ENCODE measurements at regions of chr4 and their contacts with region 1.

Region 1: DNA sequence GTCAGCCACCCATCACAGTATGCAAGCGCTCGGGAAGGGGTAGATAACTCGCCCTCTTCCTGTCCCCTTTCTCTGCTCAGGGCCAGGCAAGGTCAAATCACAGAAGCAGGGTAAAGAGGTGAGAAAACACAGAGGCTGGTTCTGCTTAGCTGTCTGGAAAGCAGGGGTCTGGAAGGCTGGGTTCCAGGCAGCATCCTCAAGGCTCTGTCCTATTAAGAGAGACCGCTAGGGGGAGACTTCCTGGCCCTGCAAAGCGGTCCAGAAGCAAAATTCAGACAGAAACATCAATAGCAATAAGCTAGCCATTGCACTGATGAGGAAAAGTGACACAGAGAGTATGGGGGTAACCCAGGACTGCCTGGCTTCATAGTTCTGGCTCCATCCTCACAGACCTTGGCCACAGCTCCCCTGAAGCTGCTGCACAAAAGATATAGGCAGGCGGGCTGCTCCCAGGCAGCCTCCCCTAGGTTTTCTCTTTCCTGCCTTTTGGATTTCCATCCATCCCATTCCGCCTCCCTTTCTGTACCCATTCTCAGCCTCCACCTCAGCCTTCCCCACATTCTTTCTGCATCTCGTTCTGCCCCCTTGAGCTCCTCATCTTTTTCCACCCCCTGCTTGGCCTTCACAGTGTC is 308.5 kb downstream of the EVC2 start:
- DNase-seq: peak; percentile 38
- ATAC-seq: peak; percentile 79
- H3K4me3 ChIP-seq: no peak overlapping the region
- H3K27ac ChIP-seq: no peak overlapping the region
- H3K4me1 ChIP-seq: peaks cover 4% of the 10 kb centered on the region; the same call in 1 of the 2 replicates
- H3K27me3 ChIP-seq: no peaks in the 10 kb centered on the region
- CTCF ChIP-seq: peak; percentile 64
- POLR2A ChIP-seq: no peak
- RAD21 ChIP-seq: peak; percentile 66

Region 2: GRCh38 chr4:5256421-5256820 is 143.5 kb before region 1 on chr4:
- CTCF ChIA-PET with region 1: no interaction called
- POLR2A ChIA-PET with region 1: no interaction called
- dilution Hi-C with region 1: no loop called
- in situ Hi-C with region 1: no loop called
- intact Hi-C with region 1: no loop called
- DNase-seq: no peak
- ATAC-seq: no peak
- H3K4me3 ChIP-seq: no peak overlapping the region
- H3K27ac ChIP-seq: no peak overlapping the region
- H3K4me1 ChIP-seq: no peaks in the 10 kb centered on the region
- H3K27me3 ChIP-seq: no peaks in the 10 kb centered on the region
- CTCF ChIP-seq: no peak
- POLR2A ChIP-seq: no peak
- RAD21 ChIP-seq: no peak

Region 3: GRCh38 chr4:5381961-5382441 is 17.9 kb before region 1 on chr4:
- CTCF ChIA-PET with region 1: interaction called, 10 read pairs
- POLR2A ChIA-PET with region 1: no interaction called
- dilution Hi-C with region 1: no loop called
- in situ Hi-C with region 1: no loop called
- intact Hi-C with region 1: no loop called
- DNase-seq: peak; percentile 94
- ATAC-seq: peak; percentile 70
- H3K4me3 ChIP-seq: no peak overlapping the region
- H3K27ac ChIP-seq: peak overlapping the region; percentile 86
- H3K4me1 ChIP-seq: peaks cover 29% of the 10 kb centered on the region
- H3K27me3 ChIP-seq: no peaks in the 10 kb centered on the region
- CTCF ChIP-seq: no peak
- POLR2A ChIP-seq: 0 out of 2 replicates have a peak, but pooled peaks have one; percentile 11
- RAD21 ChIP-seq: no peak

Region 4: GRCh38 chr4:5409972-5410618 is 10.2 kb after region 1 on chr4:
- CTCF ChIA-PET with region 1: interaction called, 14 read pairs
- POLR2A ChIA-PET with region 1: no interaction called
- dilution Hi-C with region 1: no loop called
- in situ Hi-C with region 1: no loop called
- intact Hi-C with region 1: no loop called
- DNase-seq: no peak
- ATAC-seq: peak; percentile 65
- H3K4me3 ChIP-seq: no peak overlapping the region
- H3K27ac ChIP-seq: no peak overlapping the region
- H3K4me1 ChIP-seq: no peaks in the 10 kb centered on the region
- H3K27me3 ChIP-seq: no peaks in the 10 kb centered on the region
- CTCF ChIP-seq: 0 out of 2 replicates have a peak, but pooled peaks have one; percentile 4
- POLR2A ChIP-seq: no peak
- RAD21 ChIP-seq: no peak

Region 5: DNA sequence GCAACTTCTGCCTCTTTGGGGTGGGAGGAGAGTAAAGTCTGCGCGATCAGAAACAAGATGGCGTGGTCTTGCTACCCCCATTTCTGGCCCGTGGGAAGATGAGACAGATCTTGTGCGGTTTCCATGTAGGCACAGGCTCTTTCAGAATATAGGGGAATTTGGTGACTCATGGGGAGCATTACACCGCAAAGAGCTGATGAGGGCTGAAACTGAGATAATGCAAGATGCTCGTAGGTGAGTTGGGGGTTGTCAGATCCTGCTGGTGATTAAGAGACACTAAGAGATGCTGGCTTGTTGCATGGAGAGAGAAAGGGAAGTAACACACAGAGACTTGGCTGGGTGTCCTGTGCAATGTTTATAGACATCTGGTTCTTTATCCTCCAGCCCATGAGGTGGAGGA is 312.6 kb after region 1 on chr4:
- CTCF ChIA-PET with region 1: no interaction called
- POLR2A ChIA-PET with region 1: no interaction called
- dilution Hi-C with region 1: no loop called
- in situ Hi-C with region 1: no loop called
- intact Hi-C with region 1: no loop called
- DNase-seq: peak; percentile 81
- ATAC-seq: no peak
- H3K4me3 ChIP-seq: peak overlapping the region; percentile 83; the same call in 1 of the 2 replicates
- H3K27ac ChIP-seq: no peak overlapping the region
- H3K4me1 ChIP-seq: peaks cover 27% of the 10 kb centered on the region
- H3K27me3 ChIP-seq: no peaks in the 10 kb centered on the region
- CTCF ChIP-seq: no peak
- POLR2A ChIP-seq: no peak
- RAD21 ChIP-seq: no peak

Region 6: DNA sequence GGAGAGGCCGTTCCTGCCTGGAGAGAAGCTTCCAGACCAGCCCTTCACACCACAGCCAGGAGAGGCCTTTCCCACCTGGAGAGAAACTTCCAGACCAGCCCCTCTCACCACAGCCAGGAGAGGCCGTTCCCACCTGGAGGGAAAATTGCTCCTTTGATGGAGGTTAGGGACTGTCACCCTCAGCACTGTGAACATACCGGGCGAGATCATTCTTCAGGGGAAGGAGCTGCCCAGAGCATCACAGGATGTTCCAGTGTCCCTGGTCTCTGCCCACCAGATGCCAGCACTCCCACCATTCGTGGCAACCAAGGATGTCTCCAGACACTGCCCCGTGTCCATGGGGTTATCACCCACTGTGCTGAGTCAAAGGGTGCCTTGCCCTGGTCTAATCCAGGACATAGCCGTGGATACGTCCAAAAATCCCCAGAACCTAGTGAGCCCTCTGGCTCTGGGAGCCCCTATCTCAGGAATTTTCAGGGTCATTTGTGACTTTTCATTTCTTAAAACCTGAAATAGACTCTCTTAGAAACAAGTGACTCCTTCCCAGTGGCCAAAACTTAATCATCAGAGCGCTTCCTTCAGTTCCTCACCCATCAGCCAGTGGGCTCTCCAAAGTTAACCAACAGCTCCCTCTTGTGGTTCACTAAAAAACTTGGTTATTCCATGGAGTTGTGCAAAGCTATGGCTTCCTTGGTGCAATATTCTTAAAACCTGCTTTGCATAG is 412.8 kb after region 1 on chr4:
- CTCF ChIA-PET with region 1: no interaction called
- POLR2A ChIA-PET with region 1: no interaction called
- dilution Hi-C with region 1: no loop called
- in situ Hi-C with region 1: no loop called
- intact Hi-C with region 1: loop called (anchors 5 kb)
- DNase-seq: peak; percentile 80
- ATAC-seq: peak; percentile 93
- H3K4me3 ChIP-seq: no peak overlapping the region
- H3K27ac ChIP-seq: no peak overlapping the region
- H3K4me1 ChIP-seq: no peaks in the 10 kb centered on the region
- H3K27me3 ChIP-seq: no peaks in the 10 kb centered on the region
- CTCF ChIP-seq: peak; percentile 84
- POLR2A ChIP-seq: no peak
- RAD21 ChIP-seq: peak; percentile 83